ENCODE measurements at regions of chr7 and their contacts with region 1.

Region 1: DNA sequence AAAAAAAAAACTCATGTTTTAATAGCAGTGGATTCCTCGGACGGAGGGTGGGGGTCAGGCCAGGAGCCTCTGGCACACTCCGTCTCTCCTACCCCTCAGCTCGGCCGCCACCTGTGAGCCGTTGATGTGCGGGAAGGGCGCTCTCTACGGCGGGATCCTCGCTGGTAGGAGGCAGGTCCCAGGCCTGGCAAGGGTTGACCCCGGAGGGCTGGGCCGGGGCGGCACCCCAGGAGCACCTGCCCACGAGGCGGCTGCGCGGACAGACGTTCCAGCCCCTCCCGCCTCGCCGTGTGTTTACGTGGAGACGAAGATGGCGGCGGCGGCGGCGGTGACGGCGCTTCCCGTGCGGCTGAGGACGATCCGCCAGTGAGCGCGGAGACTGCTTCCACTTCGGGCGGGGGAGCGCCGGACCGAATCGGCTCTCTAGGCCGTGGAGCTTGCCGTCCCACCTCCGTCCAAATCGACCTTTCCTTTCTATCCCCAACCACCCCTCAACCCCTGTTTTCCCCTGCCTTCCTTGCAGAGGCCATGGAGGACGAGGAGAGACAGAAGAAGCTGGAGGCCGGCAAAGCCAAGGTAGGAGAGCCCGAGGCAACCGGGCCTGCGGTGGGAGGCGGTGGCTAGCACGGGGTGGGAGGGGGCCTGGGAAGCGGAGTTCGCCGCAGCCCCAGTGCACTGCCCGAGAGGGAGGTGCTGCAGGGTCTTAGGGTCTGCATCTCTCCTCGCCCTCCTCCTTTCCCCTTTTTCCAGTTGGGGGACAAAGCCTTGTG is at the start of gene AKAP9:
- DNase-seq: peak; percentile 71 to 98 (median 86)

Region 2: DNA sequence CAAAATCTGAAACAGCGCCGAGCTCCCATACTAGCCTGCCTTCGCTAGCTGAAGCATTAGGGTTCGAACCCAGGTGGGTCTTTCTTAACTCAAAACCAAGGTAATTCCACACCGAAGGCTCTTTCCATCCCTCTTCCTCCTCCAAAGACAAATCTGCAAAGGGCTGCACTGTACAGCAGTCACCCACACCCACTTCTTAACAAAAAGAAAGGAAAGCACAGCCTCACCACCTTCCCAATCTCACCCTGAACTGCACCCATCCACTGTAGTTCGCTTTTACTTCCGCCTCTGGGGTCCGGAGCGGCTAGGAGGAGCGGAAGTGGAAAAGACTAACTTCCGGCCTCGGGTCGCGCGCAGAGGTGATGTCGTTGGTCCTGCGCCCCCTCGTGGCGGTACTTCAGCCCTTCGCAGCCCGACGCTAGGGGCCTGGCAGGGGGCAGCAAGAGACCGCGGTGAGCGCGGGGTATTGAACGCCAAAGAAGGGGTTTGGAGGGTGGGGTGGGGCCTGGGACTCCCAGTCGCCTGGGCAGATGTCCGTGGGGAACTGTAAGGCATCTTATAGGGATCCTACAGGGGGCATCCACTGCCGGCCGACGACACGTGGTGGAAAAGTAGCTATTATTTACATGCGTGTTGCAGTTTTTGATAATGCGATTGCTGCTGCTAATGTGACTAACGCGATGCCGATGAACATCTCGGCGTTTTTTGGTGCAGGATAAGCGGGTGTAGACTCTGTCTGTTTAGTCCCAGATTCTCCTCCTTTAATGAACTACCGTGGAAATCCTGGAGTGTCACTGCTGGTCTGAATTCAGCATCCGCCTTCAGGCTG is 60.1 kb before region 1 on chr7 and contains the start of gene MTERF1:
- intact Hi-C with region 1: loop called (anchors 5 kb)
- DNase-seq: peak; percentile 86 to 98 (median 94)

Region 3: GRCh38 chr7:91979590-91979989 is 38.8 kb after region 1 on chr7:
- intact Hi-C with region 1: loop called (anchors 5 kb)
- DNase-seq: no peak

Measured in posterior cingulate gyrus (tissue), 11 donors.